Mammary epithelial cell (primary cell): ENCODE measurements at regions of chr6 and their contacts with region 1.

Region 1: GRCh38 chr6:71288228-71289001 is at the start of gene OGFRL1:
- DNase-seq: peak; percentile 73
- H3K4me3 ChIP-seq: peak within 1 kb of the TSS; percentile 74 to 88 (median 81)
- H3K27ac ChIP-seq: peak within 1 kb of the TSS; percentile 45
- H3K4me1 ChIP-seq: peaks cover 50% of the 10 kb centered on the region
- H3K27me3 ChIP-seq: no peaks in the 10 kb centered on the region
- CTCF ChIP-seq: peak in 1 of 2 donors; percentile 20
- total RNA-seq, gene OGFRL1: 33.4 to 106 TPM

Region 2: GRCh38 chr6:71205336-71205956 is 83.0 kb before region 1 on chr6:
- CTCF ChIA-PET with region 1: no interaction called
- dilution Hi-C with region 1: no loop called
- in situ Hi-C with region 1: no loop called
- intact Hi-C with region 1: loop called (anchors 2 kb)
- DNase-seq: peak; percentile 30
- H3K4me3 ChIP-seq: peak overlapping the region in 1 of 3 experiments; percentile 12
- H3K27ac ChIP-seq: no peak overlapping the region
- H3K4me1 ChIP-seq: peaks cover 10% of the 10 kb centered on the region
- H3K27me3 ChIP-seq: no peaks in the 10 kb centered on the region
- CTCF ChIP-seq: peak in 1 of 2 donors; percentile 15

Region 3: GRCh38 chr6:71250099-71250606 is 38.3 kb before region 1 on chr6:
- CTCF ChIA-PET with region 1: no interaction called
- dilution Hi-C with region 1: no loop called
- in situ Hi-C with region 1: no loop called
- intact Hi-C with region 1: loop called (anchors 2 kb)
- DNase-seq: peak; percentile 57
- H3K4me3 ChIP-seq: peak overlapping the region in 1 of 3 experiments; percentile 10
- H3K27ac ChIP-seq: peak overlapping the region; percentile 28
- H3K4me1 ChIP-seq: peaks cover 28% of the 10 kb centered on the region
- H3K27me3 ChIP-seq: no peaks in the 10 kb centered on the region
- CTCF ChIP-seq: no peak

Region 4: GRCh38 chr6:71324194-71324785 is 35.9 kb after region 1 on chr6:
- CTCF ChIA-PET with region 1: no interaction called
- dilution Hi-C with region 1: no loop called
- in situ Hi-C with region 1: no loop called
- intact Hi-C with region 1: no loop called
- DNase-seq: no peak
- H3K4me3 ChIP-seq: no peak overlapping the region
- H3K27ac ChIP-seq: no peak overlapping the region
- H3K4me1 ChIP-seq: no peaks in the 10 kb centered on the region
- H3K27me3 ChIP-seq: no peaks in the 10 kb centered on the region
- CTCF ChIP-seq: no peak

Region 5: GRCh38 chr6:71349395-71349794 is 61.0 kb after region 1 on chr6:
- CTCF ChIA-PET with region 1: no interaction called
- dilution Hi-C with region 1: no loop called
- in situ Hi-C with region 1: no loop called
- intact Hi-C with region 1: loop called (anchors 1 kb)
- DNase-seq: no peak
- H3K4me3 ChIP-seq: no peak overlapping the region
- H3K27ac ChIP-seq: no peak overlapping the region
- H3K4me1 ChIP-seq: peaks cover 8% of the 10 kb centered on the region
- H3K27me3 ChIP-seq: no peaks in the 10 kb centered on the region
- CTCF ChIP-seq: peak; percentile 49 to 68